Activated naive CD4-positive, alpha-beta T cell treated with anti-CD3 and anti-CD28 coated beads, Interleukin-2, amount 10 ng/mL, durations not matched to agents 7 days and 5 days (primary cell): ENCODE measurements at regions of chr15 and their contacts with region 1.

Region 1: GRCh38 chr15:85330901-85331588 is 49.4 kb upstream of the AKAP13 start:
- DNase-seq: peak; percentile 82
- H3K4me3 Mint-ChIP-seq: peak overlapping the region; percentile 84
- H3K27ac Mint-ChIP-seq: peak overlapping the region; percentile 99
- H3K4me1 Mint-ChIP-seq: peaks cover 56% of the 10 kb centered on the region
- H3K27me3 Mint-ChIP-seq: peaks cover 12% of the 10 kb centered on the region

Region 2: GRCh38 chr15:85296615-85297402 is 34.2 kb before region 1 on chr15:
- CTCF ChIA-PET with region 1: interaction called, 23 read pairs
- DNase-seq: peak; percentile 78
- H3K4me3 Mint-ChIP-seq: no peak overlapping the region
- H3K27ac Mint-ChIP-seq: no peak overlapping the region
- H3K4me1 Mint-ChIP-seq: peaks cover 15% of the 10 kb centered on the region
- H3K27me3 Mint-ChIP-seq: peaks cover 7% of the 10 kb centered on the region

Region 3: DNA sequence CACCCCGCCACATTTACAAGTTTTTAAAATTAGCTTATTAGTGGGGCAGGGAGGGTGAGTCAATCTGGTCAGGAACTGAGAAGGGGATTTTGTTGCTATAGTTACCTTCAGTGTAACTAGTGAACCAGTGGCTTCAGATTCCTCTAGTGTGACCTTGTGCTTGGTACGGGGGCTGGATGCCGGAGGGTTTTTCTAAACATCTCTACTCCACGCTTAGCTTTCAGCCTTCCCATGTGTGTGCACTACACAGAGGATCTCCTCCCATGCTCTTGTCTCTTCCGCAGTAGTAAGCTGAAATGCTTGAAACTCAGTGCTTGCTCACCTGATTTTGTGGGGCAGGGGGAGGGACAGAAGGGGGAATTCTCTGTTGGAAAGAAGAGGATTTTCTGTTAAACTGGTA is 18.6 kb before region 1 on chr15:
- CTCF ChIA-PET with region 1: interaction called, 13 read pairs
- DNase-seq: no peak
- H3K4me3 Mint-ChIP-seq: no peak overlapping the region
- H3K27ac Mint-ChIP-seq: no peak overlapping the region
- H3K4me1 Mint-ChIP-seq: peaks cover 52% of the 10 kb centered on the region
- H3K27me3 Mint-ChIP-seq: peaks cover 11% of the 10 kb centered on the region

Region 4: DNA sequence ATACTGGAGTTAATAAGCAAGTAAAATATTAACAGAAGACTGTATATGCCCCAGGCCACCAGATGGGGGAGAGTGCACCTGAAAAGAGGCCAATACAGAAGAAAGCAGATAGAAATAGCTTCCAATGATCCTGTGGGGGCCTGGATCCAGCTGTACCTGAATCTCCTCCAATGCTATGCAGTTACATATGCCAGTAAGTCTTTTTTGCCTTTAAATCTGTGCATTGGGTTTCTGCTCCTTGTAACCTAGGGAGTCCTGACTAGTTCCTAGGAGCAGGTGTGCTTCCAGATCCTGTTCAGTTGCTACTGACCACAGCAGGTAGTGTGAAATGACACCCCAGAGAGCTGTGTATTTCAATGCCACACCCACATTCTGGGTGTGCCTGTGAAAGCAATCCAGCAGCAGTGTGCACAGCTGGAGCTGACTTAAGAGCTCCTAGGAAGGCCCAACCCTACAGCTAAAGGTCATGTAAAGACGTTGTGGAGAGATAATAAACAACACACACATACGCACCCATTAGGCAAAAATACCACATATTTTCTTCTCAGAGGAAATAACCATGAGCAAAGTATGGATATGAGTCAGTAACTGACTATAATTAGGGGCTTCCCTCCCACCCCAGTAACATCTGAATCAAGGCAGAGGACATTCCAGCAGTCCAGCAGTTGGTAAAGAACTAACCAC is 12.9 kb before region 1 on chr15:
- CTCF ChIA-PET with region 1: interaction called, 13 read pairs
- DNase-seq: peak; percentile 28
- H3K4me3 Mint-ChIP-seq: no peak overlapping the region
- H3K27ac Mint-ChIP-seq: peak overlapping the region; percentile 67
- H3K4me1 Mint-ChIP-seq: peaks cover 48% of the 10 kb centered on the region
- H3K27me3 Mint-ChIP-seq: peaks cover under 1% of the 10 kb centered on the region

Region 5: DNA sequence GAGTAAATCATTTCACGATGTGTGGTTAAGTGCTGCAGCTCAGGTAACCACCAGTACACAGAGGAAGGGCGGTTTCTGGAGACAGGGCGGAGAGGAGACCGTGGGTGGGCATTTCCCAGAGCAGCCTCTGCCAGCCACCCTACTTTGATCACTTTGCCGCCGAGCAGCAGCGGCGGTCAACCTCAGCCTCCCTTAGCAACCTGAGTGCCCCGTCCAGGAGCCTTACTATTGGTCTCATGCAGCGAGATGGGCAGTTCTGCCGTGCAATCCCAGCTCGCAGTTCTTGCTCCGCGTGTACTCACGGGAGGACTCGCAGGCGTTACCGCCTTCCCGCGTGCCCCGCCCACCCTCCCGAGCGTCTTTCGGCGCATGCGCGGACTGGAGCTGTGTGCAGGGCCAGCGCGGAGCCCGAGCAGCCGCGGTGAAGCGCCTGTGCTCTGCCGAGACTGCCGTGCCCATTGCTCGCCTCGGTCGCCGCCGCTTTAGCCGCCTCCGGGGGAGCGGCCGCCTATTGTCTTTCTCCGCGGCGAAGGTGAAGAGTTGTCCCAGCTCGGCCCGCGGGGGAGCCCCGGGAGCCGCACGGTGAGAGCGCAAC is 49.3 kb after region 1 on chr15 and contains the start of gene AKAP13:
- CTCF ChIA-PET with region 1: interaction called, 10 read pairs
- DNase-seq: peak; percentile 97
- H3K4me3 Mint-ChIP-seq: peak within 1 kb of the TSS; percentile 76
- H3K27ac Mint-ChIP-seq: peak within 1 kb of the TSS; percentile 97
- H3K4me1 Mint-ChIP-seq: peaks cover 67% of the 10 kb centered on the region
- H3K27me3 Mint-ChIP-seq: no peaks in the 10 kb centered on the region

Region 6: GRCh38 chr15:85607842-85608241 is 276.8 kb after region 1 on chr15:
- CTCF ChIA-PET with region 1: no interaction called
- DNase-seq: no peak
- H3K4me3 Mint-ChIP-seq: no peak overlapping the region
- H3K27ac Mint-ChIP-seq: no peak overlapping the region
- H3K4me1 Mint-ChIP-seq: peaks cover 16% of the 10 kb centered on the region
- H3K27me3 Mint-ChIP-seq: no peaks in the 10 kb centered on the region